ENCODE measurements at regions of chr13 and their contacts with region 1.

Region 1: DNA sequence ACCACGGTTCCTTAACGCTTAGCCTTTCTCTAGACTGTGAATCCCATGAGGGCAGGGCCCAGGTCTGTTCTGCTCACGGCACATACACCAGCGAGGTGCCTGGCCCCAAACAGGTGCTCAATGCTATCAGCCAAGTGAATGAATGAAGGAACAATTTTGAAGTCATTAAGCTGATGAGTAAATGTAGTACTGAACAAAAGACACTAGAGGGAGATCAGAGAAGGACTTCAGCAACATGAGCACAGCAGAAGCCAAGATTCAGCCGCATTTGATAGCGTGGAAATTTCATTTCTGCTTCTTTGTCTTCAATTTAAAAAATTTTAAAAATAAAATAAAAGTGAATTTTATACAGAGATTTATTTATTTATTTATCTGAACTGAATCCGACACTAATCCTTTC is 20.1 kb upstream of the MYO16 start:
- DNase-seq: peak; percentile 33
- H3K4me3 ChIP-seq: no peak overlapping the region
- H3K27ac ChIP-seq: no peak overlapping the region
- H3K4me1 ChIP-seq: no peaks in the 10 kb centered on the region
- H3K27me3 ChIP-seq: no peaks in the 10 kb centered on the region
- CTCF ChIP-seq: peak; percentile 39
- EP300 ChIP-seq: no peak
- RAD21 ChIP-seq: peak; percentile 74

Region 2: GRCh38 chr13:108525827-108526226 is 83.5 kb before region 1 on chr13:
- CTCF ChIA-PET with region 1: no interaction called
- POLR2A ChIA-PET with region 1: no interaction called
- DNase-seq: no peak
- H3K4me3 ChIP-seq: no peak overlapping the region
- H3K27ac ChIP-seq: no peak overlapping the region
- H3K4me1 ChIP-seq: no peaks in the 10 kb centered on the region
- H3K27me3 ChIP-seq: no peaks in the 10 kb centered on the region
- CTCF ChIP-seq: no peak
- EP300 ChIP-seq: no peak
- RAD21 ChIP-seq: no peak

Region 3: GRCh38 chr13:108549934-108550333 is 59.4 kb before region 1 on chr13:
- CTCF ChIA-PET with region 1: no interaction called
- POLR2A ChIA-PET with region 1: no interaction called
- DNase-seq: no peak
- H3K4me3 ChIP-seq: no peak overlapping the region
- H3K27ac ChIP-seq: no peak overlapping the region
- H3K4me1 ChIP-seq: no peaks in the 10 kb centered on the region
- H3K27me3 ChIP-seq: no peaks in the 10 kb centered on the region
- CTCF ChIP-seq: no peak
- EP300 ChIP-seq: no peak
- RAD21 ChIP-seq: no peak

Region 4: GRCh38 chr13:108595436-108596274 is 13.7 kb before region 1 on chr13:
- CTCF ChIA-PET with region 1: interaction called, 16 read pairs
- POLR2A ChIA-PET with region 1: no interaction called
- DNase-seq: no peak
- H3K4me3 ChIP-seq: no peak overlapping the region
- H3K27ac ChIP-seq: no peak overlapping the region
- H3K4me1 ChIP-seq: no peaks in the 10 kb centered on the region
- H3K27me3 ChIP-seq: no peaks in the 10 kb centered on the region
- CTCF ChIP-seq: no peak
- EP300 ChIP-seq: no peak
- RAD21 ChIP-seq: no peak

Region 5: GRCh38 chr13:108889324-108889984 is 280.1 kb after region 1 on chr13:
- CTCF ChIA-PET with region 1: interaction called, 129 read pairs
- POLR2A ChIA-PET with region 1: no interaction called
- DNase-seq: no peak
- H3K4me3 ChIP-seq: no peak overlapping the region
- H3K27ac ChIP-seq: no peak overlapping the region
- H3K4me1 ChIP-seq: peaks cover 0 to 3% of the 10 kb centered on the region in 2 experiments; a peak in 1 of 4 replicates
- H3K27me3 ChIP-seq: no peaks in the 10 kb centered on the region
- CTCF ChIP-seq: no peak
- EP300 ChIP-seq: no peak
- RAD21 ChIP-seq: no peak

Region 6: DNA sequence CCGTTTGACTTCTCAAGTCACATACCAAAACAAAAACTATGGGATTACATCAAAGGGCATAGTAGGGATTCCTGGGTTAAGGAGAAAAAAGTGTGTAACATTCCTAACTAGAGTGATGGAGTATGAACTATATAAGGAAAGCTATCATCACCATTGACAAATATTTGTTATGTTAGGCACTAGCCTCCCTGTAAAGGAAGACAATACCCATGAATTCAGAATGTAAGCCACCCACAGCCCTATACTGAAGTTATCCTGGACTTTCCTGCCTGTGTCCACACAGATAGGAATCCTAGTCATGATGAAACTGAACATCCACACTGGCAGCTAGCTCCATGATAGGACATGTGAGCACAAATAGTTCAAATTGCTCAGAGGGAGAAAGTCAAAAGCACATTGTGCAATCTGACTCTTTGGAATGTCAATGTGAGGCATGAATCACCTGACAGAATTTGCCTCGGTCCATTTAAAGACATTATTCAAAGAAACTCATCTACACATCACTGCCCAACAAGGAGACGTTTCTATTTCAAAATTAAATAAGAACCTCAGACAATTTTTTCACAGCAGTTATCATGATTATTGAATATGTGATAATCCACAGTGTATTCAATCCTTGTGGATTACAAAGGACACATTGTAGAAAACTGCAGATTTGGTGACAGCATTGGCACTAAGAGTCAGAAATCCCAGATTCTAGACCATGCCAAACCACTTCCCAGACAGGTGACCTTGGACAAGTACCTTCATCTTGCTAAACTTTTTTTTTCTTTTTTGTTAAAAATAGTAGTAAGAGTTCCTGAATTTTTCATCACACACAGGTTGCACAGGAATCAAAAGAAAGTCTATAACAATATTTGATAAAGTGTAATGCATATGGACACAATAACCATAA is 647.8 kb after region 1 on chr13:
- CTCF ChIA-PET with region 1: no interaction called
- POLR2A ChIA-PET with region 1: no interaction called
- DNase-seq: no peak
- H3K4me3 ChIP-seq: no peak overlapping the region
- H3K27ac ChIP-seq: peak overlapping the region; percentile 50 to 65
- H3K4me1 ChIP-seq: peaks cover 0 to 5% of the 10 kb centered on the region in 2 experiments; a peak in 1 of 4 replicates
- H3K27me3 ChIP-seq: no peaks in the 10 kb centered on the region
- CTCF ChIP-seq: no peak
- EP300 ChIP-seq: peak in 1 of 2 experiments; percentile 72; a peak in 3 of 4 replicates
- RAD21 ChIP-seq: no peak